ENCODE measurements at regions of chr5 and their contacts with region 1.

Region 1: DNA sequence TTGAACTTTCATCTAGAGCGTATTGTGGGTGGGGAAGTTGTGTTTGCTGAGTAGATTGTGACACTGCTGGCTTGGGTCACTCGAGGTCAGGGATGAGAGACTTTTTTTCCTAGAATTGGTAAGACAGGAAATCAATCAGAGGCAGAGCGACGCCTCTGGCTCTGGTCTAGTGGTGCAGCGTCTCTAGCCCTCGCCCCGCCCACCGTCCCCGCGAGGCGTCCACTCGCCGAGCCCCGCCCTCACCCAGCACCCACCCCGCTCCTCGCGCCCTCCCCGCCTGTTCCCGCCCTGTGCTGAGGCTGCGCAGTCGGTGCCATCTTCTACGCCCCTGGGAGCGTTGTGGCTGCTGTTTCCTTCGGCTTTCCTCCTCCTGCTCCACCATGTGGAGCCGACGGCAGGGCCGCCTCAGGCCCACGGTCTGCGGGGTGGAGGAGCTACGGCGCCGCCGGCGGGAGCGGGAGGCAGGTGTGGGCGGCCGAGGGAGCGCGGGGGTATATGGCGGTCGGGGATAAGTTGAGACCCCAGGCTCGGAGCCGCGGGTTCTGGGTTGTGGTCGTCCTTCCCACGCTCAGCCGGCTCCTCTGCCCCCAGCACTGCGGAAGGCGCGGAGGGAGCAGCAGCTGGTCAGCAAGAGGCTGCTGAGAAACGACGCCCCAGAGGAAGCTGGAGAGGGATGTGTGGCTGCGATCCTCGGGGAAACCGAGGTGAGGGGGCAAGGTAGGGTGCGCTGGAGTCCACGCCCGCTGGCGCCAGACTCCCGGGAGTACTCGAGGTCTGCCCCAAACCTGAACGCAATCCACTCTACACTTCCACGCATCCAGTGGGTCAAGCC is at the start of gene TMCO6:
- DNase-seq: peak; percentile 46
- H3K4me3 ChIP-seq: peak within 1 kb of the TSS; percentile 80
- CTCF ChIP-seq: peak; percentile 64

Region 2: GRCh38 chr5:140547508-140548299 is 91.7 kb before region 1 on chr5 and contains the start of gene EIF4EBP3:
- CTCF ChIA-PET with region 1: interaction called, 36 read pairs
- POLR2A ChIA-PET with region 1: interaction called, 3 read pairs
- DNase-seq: peak; percentile 77
- H3K4me3 ChIP-seq: peak within 1 kb of the TSS; percentile 49
- CTCF ChIP-seq: peak; percentile 70

Region 3: DNA sequence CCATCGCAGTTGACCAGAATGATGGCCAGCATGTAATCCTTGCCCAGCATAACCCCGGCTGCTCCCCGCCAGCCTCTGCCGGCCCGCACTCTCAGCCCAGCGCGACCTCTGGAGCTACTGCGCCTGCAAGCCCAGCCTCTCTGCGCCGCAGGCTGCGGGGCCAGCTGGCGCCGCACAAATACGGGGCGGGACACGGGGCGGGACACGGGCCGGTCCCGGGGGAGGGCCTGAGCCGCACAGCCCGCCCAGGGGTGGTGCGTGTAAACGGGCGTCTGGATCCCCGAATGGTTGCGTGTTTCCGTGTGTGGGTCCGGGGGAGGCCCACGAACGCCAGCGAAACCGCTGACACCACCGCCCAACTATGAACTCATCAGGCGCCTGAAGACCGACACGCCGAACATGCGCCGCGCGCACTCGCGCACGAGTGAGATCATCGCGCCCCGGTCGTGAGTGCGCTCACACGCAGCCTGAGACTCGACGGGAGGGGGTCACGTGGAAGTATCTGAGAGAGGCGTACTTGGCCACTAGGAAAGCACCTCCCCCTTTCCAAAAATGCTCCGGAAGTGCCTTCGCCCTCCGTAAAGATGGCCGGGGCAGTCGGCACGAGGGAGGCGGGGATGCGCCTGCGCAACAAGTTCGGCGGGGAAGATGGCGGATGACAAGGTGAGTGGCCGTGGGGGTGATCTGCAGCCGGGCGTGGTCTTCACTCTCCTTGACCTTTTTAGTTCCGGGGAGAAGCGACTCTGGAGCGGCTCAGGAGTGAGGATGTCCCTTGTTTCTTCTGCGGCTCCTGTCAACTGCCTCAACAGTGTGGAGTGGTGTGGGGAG is 75.0 kb before region 1 on chr5 and contains the starts of genes APBB3 and SLC35A4:
- CTCF ChIA-PET with region 1: interaction called, 13 read pairs
- POLR2A ChIA-PET with region 1: interaction called, 3 read pairs
- DNase-seq: peak; percentile 94
- H3K4me3 ChIP-seq: peak within 1 kb of the TSS; percentile 96
- CTCF ChIP-seq: no peak

Region 4: GRCh38 chr5:140609126-140609525 is 30.2 kb before region 1 on chr5:
- CTCF ChIA-PET with region 1: no interaction called
- POLR2A ChIA-PET with region 1: no interaction called
- DNase-seq: no peak
- H3K4me3 ChIP-seq: no peak overlapping the region
- CTCF ChIP-seq: no peak

Region 5: DNA sequence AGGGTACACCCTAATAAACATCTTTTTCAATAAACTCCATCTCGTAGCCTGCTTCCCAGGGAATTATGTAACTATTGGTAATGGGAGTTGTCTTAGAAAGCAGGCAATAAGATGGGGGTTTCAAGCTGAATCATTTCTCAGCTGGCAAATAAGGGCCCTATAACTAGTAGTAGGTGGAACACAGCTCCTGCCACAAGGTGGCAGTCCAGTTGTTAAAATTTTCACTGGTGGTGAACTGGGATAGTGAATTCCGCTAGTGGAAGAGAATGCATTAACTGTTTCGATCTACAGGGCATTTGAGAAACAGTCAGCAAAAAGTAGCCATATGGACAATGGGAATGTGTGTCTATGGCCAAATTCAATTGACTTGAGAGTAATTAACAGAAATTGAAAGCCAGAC is 633.5 kb after region 1 on chr5:
- CTCF ChIA-PET with region 1: no interaction called
- POLR2A ChIA-PET with region 1: no interaction called
- DNase-seq: no peak
- H3K4me3 ChIP-seq: no peak overlapping the region
- CTCF ChIP-seq: no peak

Measured in AG04449 (cell line).